ENCODE measurements at regions of chr17 and their contacts with region 1.

Region 1: DNA sequence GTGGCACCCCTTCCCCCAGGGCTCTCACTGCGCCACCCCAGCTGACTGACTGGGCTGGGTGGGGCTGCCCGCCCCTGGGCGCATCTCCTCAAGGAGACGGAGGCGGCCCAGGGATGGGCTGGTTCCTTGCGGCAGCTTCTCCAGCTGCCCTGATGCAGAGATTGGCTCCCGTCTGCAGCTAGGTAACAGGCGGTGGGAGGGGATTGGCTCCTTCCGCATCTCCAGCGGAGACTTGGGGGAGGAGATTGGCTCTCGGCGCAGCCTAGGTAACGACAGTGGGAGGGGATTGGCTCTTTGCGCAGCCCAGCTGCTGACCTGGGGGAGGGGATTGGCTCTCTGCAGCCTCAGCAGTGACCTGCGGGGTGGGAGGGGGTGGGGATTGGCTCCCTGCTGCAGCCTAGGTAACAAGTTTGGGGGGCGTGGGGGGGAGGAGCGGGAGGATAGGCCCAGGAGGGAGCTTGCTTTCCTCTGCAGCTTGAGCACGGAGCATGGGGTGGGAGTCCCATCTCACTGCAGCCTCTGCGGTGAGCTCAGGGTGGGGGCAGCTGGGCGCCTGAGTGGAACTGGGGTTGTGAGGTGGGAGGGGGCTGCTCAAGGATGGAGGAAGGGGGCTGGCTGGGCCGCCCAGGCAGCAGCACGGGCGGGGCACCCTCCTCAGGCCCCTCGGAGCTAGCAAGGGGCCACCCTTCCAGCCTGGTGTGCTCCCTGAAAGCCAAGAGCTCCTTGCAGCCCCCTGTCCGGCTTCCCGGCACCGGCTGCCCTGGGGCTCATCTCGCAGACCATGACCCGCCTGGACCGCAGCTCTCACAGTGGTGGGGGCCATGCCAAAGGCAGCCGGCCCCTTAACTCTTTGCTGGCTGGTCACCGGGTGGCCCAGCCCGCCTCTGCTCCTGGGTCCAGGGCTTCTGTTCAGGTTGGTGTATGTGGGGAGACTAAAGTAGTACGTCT is 6.4 kb downstream of the NFE2L1 start:
- DNase-seq: peak; percentile 94
- H3K4me3 ChIP-seq: peak overlapping the region; percentile 38
- H3K27ac ChIP-seq: peak overlapping the region; percentile 98
- H3K4me1 ChIP-seq: peaks cover 68% of the 10 kb centered on the region
- H3K27me3 ChIP-seq: no peaks in the 10 kb centered on the region
- CTCF ChIP-seq: no peak

Region 2: GRCh38 chr17:47989159-47989558 is 65.4 kb before region 1 on chr17:
- CTCF ChIA-PET with region 1: no interaction called
- POLR2A ChIA-PET with region 1: interaction called, 10 read pairs
- intact Hi-C with region 1: no loop called
- DNase-seq: no peak
- H3K4me3 ChIP-seq: no peak overlapping the region
- H3K27ac ChIP-seq: peak overlapping the region; percentile 52
- H3K4me1 ChIP-seq: peaks cover 27% of the 10 kb centered on the region
- H3K27me3 ChIP-seq: no peaks in the 10 kb centered on the region
- CTCF ChIP-seq: no peak

Region 3: GRCh38 chr17:48002266-48002915 is 52.1 kb before region 1 on chr17:
- CTCF ChIA-PET with region 1: no interaction called
- POLR2A ChIA-PET with region 1: interaction called, 13 read pairs
- intact Hi-C with region 1: no loop called
- DNase-seq: peak; percentile 98
- H3K4me3 ChIP-seq: peak overlapping the region; percentile 6
- H3K27ac ChIP-seq: peak overlapping the region; percentile 98
- H3K4me1 ChIP-seq: peaks cover 67% of the 10 kb centered on the region
- H3K27me3 ChIP-seq: no peaks in the 10 kb centered on the region
- CTCF ChIP-seq: no peak

Region 4: GRCh38 chr17:48011405-48012150 is 42.9 kb before region 1 on chr17:
- CTCF ChIA-PET with region 1: no interaction called
- POLR2A ChIA-PET with region 1: interaction called, 14 read pairs
- intact Hi-C with region 1: no loop called
- DNase-seq: peak; percentile 88
- H3K4me3 ChIP-seq: peak overlapping the region; percentile 42
- H3K27ac ChIP-seq: peak overlapping the region; percentile 71
- H3K4me1 ChIP-seq: peaks cover 54% of the 10 kb centered on the region
- H3K27me3 ChIP-seq: no peaks in the 10 kb centered on the region
- CTCF ChIP-seq: peak; percentile 81

Region 5: DNA sequence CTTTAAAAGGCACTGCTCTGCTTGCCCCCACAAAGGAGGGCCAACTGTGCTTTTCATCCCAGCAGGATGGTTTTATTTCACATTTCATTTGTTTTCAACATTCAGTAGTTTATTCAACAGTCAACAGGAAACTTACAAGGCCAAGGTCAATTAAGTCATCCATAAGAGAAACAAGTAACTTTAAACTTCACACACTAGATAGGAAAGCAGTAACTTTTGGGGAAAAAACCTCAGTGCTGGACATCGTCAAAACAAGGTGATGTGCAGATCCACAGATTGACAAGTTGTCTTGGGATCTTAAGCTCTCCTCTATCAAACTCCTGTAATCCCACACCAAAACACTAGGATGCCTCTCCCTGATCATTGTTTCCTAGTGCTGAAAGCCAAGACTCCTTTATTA is 12.1 kb after region 1 on chr17:
- CTCF ChIA-PET with region 1: interaction called, 7 read pairs
- POLR2A ChIA-PET with region 1: interaction called, 3 read pairs
- intact Hi-C with region 1: loop called (anchors 1 kb)
- DNase-seq: no peak
- H3K4me3 ChIP-seq: no peak overlapping the region
- H3K27ac ChIP-seq: no peak overlapping the region
- H3K4me1 ChIP-seq: no peaks in the 10 kb centered on the region
- H3K27me3 ChIP-seq: no peaks in the 10 kb centered on the region
- CTCF ChIP-seq: no peak

Measured in A673 (cell line).